CD4-positive, alpha-beta memory T cell (primary cell): ENCODE measurements at regions of chr4 and their contacts with region 1.

Region 1: DNA sequence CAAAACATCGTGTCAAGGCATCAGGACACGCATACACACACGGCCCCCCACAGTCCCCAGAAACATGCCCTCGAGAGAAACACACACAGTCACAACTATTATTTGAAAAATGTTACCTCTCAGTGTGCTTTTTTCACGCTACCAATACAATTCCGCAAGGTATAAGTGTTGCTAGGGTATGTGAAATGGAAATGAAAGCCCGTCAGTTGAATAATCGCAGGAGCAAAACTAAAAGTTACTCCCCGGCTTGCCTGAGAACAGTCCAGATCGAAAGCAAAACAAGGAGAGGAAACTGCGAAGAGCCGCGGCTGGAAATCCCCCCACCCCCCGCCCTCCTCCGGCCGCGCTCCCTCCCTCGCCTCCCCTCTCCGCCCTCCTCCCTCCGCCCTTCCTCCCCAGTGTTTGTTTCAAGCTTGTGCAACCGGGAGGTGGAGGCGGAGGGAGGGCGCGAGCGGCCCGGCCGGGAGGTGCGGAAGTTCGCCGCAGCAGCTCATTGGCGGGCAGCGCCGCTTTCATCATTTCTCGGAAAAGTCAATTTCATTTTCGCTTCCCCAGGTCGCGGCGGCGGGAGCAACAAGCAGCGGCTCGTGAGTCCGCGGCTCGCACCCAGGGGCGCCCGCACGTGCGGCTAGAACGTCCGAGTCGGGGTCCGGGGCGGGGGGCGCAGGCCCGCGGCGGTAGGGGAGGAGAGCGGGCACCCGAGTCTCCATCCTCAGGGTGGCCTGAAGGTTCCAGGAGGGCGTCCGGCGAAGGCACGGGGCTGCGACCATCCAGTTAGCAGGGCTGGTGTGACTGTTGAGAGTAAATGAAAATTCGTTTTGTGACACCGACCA is at the start of gene IRF2:
- DNase-seq: peak; percentile 92 to 99 (median 97)
- H3K4me3 ChIP-seq: peak within 1 kb of the TSS; percentile 96 to 100
- H3K4me3 Mint-ChIP-seq: peak within 1 kb of the TSS; percentile 95 to 100 (median 100)
- H3K27ac ChIP-seq: peak within 1 kb of the TSS; percentile 99
- H3K27ac Mint-ChIP-seq: peak within 1 kb of the TSS; percentile 96 to 100 (median 99)
- H3K4me1 ChIP-seq: peaks cover 66% of the 10 kb centered on the region
- H3K4me1 Mint-ChIP-seq: peaks cover 42 to 85% (median 57%) of the 10 kb centered on the region in 4 donors
- H3K27me3 ChIP-seq: no peaks in the 10 kb centered on the region
- H3K27me3 Mint-ChIP-seq: no peaks in the 10 kb centered on the region
- total RNA-seq, gene IRF2: 66.7 to 70.4 TPM

Region 2: GRCh38 chr4:183444214-183445066 is 1030.0 kb before region 1 on chr4 and contains the start of gene CDKN2AIP:
- CTCF ChIA-PET with region 1: no interaction called
- POLR2A ChIA-PET with region 1: no interaction called
- intact Hi-C with region 1: loop called (anchors 5 kb)
- DNase-seq: peak; percentile 93 to 96 (median 96)
- H3K4me3 ChIP-seq: peak within 1 kb of the TSS; percentile 77 to 85
- H3K4me3 Mint-ChIP-seq: peak within 1 kb of the TSS; percentile 92 to 99 (median 98)
- H3K27ac ChIP-seq: peak within 1 kb of the TSS; percentile 96
- H3K27ac Mint-ChIP-seq: peak within 1 kb of the TSS; percentile 96 to 99 (median 98)
- H3K4me1 ChIP-seq: peaks cover 52% of the 10 kb centered on the region
- H3K4me1 Mint-ChIP-seq: peaks cover 32 to 63% (median 43%) of the 10 kb centered on the region in 4 donors
- H3K27me3 ChIP-seq: no peaks in the 10 kb centered on the region
- H3K27me3 Mint-ChIP-seq: no peaks in the 10 kb centered on the region
- total RNA-seq, gene CDKN2AIP: 48.3 to 51.1 TPM

Region 3: GRCh38 chr4:183738081-183738673 is 736.3 kb before region 1 on chr4:
- CTCF ChIA-PET with region 1: no interaction called
- POLR2A ChIA-PET with region 1: no interaction called
- intact Hi-C with region 1: no loop called
- DNase-seq: no peak
- H3K4me3 ChIP-seq: no peak overlapping the region
- H3K4me3 Mint-ChIP-seq: no peak overlapping the region
- H3K27ac ChIP-seq: no peak overlapping the region
- H3K27ac Mint-ChIP-seq: no peak overlapping the region
- H3K4me1 ChIP-seq: no peaks in the 10 kb centered on the region
- H3K4me1 Mint-ChIP-seq: no peaks in the 10 kb centered on the region
- H3K27me3 ChIP-seq: no peaks in the 10 kb centered on the region
- H3K27me3 Mint-ChIP-seq: peaks cover 0 to 2% of the 10 kb centered on the region in 2 donors

Region 4: DNA sequence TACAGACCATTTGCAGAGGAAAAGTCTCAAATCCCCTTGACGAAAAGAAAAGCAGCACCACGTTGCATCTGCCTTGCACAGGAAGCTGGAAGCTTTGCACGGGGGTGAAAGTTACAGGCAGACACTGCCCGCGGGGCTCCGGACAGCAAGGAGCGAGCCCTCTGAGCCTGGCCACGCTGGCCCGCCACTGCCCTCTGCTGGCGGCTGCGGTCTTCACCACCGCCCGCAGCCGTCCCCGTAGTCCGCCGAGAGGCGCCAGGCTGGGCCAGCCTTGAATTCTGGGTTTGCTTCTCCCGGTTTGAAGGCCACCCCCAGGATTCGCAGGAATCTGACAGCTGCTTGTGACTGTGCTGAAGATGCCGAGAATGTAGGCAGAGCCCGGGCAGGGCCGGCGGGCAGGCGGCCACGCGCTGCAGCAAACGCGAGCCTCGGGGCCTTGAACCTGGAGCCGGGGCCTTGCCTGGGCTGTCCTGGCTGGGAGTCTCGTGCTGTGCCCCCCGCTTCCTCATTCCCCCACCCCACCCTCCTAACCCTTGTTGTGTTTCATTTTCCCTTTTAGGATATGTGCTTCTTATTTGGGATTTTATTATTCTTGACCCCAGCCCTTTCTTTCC is 306.0 kb before region 1 on chr4:
- CTCF ChIA-PET with region 1: no interaction called
- POLR2A ChIA-PET with region 1: no interaction called
- intact Hi-C with region 1: no loop called
- DNase-seq: peak in 4 of 5 donors; percentile 11 to 38 (median 20)
- H3K4me3 ChIP-seq: no peak overlapping the region
- H3K4me3 Mint-ChIP-seq: no peak overlapping the region
- H3K27ac ChIP-seq: no peak overlapping the region
- H3K27ac Mint-ChIP-seq: no peak overlapping the region
- H3K4me1 ChIP-seq: no peaks in the 10 kb centered on the region
- H3K4me1 Mint-ChIP-seq: peaks cover 0 to 8% (median under 1%) of the 10 kb centered on the region in 4 donors
- H3K27me3 ChIP-seq: no peaks in the 10 kb centered on the region
- H3K27me3 Mint-ChIP-seq: peaks cover 41 to 49% of the 10 kb centered on the region in 2 donors

Region 5: DNA sequence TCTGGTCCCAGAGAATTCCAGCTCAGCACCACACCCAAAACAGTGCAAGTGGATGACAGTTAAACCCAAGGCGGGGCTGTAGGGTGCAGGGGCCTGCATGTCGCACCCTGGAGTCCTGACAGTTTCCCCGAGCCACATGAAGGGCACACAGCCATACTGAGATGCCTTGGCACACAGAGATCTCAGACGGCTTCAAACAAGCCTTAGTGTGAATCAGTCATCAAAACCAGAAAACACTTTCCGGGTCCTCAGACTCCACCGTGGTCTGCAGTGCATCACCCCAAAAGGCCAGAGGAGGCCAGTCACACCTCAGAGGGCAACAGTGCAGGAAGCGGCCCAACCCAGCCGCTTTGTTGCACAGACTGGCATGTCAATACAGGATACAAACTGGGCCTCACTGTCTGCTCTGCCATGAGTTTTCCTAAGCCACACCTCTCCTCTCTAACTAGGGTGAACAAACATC is 192.2 kb before region 1 on chr4:
- CTCF ChIA-PET with region 1: no interaction called
- POLR2A ChIA-PET with region 1: interaction called, 4 read pairs
- intact Hi-C with region 1: loop called (anchors 5 kb)
- DNase-seq: peak; percentile 25 to 64 (median 37)
- H3K4me3 ChIP-seq: no peak overlapping the region
- H3K4me3 Mint-ChIP-seq: peak overlapping the region in 7 of 8 donors; percentile 3 to 43 (median 26)
- H3K27ac ChIP-seq: peak overlapping the region; percentile 13
- H3K27ac Mint-ChIP-seq: peak overlapping the region; percentile 31 to 87 (median 75)
- H3K4me1 ChIP-seq: peaks cover 37% of the 10 kb centered on the region
- H3K4me1 Mint-ChIP-seq: peaks cover 28 to 48% (median 38%) of the 10 kb centered on the region in 4 donors
- H3K27me3 ChIP-seq: no peaks in the 10 kb centered on the region
- H3K27me3 Mint-ChIP-seq: no peaks in the 10 kb centered on the region

Region 6: DNA sequence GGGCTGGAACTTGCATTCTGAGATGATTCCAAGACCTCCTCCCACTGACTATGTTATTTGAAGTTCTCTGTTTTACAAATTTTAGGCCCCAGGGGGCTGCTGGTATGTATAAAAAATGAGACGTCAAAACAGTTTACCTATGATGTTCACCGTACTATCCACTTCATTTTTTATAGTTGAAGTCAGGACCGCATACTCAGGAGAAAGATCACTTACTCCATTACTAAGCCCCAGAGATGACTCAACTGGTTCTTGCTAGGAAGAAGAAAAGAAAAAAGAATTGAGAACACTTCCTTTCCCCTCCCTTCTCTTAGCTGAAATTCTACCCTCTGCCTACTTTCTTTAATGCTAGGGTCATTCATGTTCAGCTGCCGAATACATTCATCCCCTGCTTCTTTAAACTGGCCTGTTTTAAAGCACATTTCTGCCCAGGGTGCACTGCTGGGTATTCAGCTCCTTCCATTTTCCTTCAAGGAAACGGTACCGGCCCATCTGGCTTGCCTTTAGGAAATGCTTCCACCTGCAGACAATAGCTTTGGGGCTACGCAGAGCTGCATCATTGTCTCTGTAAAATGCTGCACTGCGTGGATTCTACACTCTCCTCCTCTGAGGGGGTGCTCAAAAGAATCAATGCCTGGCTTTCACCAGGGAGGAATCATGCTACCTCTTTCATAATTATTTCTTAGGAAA is 66.3 kb before region 1 on chr4:
- CTCF ChIA-PET with region 1: interaction called, 4 read pairs
- POLR2A ChIA-PET with region 1: interaction called, 10 read pairs
- intact Hi-C with region 1: no loop called
- DNase-seq: no peak
- H3K4me3 ChIP-seq: no peak overlapping the region
- H3K4me3 Mint-ChIP-seq: peak overlapping the region in 2 of 8 donors; percentile 22 to 33
- H3K27ac ChIP-seq: no peak overlapping the region
- H3K27ac Mint-ChIP-seq: peak overlapping the region; percentile 31 to 91 (median 76)
- H3K4me1 ChIP-seq: peaks cover 37% of the 10 kb centered on the region
- H3K4me1 Mint-ChIP-seq: peaks cover 27 to 73% (median 48%) of the 10 kb centered on the region in 4 donors
- H3K27me3 ChIP-seq: no peaks in the 10 kb centered on the region
- H3K27me3 Mint-ChIP-seq: no peaks in the 10 kb centered on the region

Region 7: GRCh38 chr4:184453365-184454160 is 20.9 kb before region 1 on chr4:
- CTCF ChIA-PET with region 1: no interaction called
- POLR2A ChIA-PET with region 1: interaction called, 19 read pairs
- intact Hi-C with region 1: loop called (anchors 2 kb)
- DNase-seq: peak; percentile 42 to 82 (median 56)
- H3K4me3 ChIP-seq: no peak overlapping the region
- H3K4me3 Mint-ChIP-seq: peak overlapping the region in 7 of 8 donors; percentile 42 to 84 (median 71)
- H3K27ac ChIP-seq: peak overlapping the region; percentile 44
- H3K27ac Mint-ChIP-seq: peak overlapping the region; percentile 79 to 96 (median 88)
- H3K4me1 ChIP-seq: peaks cover 74% of the 10 kb centered on the region
- H3K4me1 Mint-ChIP-seq: peaks cover 56 to 90% (median 72%) of the 10 kb centered on the region in 4 donors
- H3K27me3 ChIP-seq: no peaks in the 10 kb centered on the region
- H3K27me3 Mint-ChIP-seq: no peaks in the 10 kb centered on the region

Region 8: GRCh38 chr4:184538023-184538599 is 63.6 kb after region 1 on chr4:
- CTCF ChIA-PET with region 1: interaction called, 13 read pairs
- POLR2A ChIA-PET with region 1: interaction called, 142 read pairs
- intact Hi-C with region 1: loop called (anchors 1 kb)
- DNase-seq: peak; percentile 59 to 71 (median 65)
- H3K4me3 ChIP-seq: peak overlapping the region; percentile 82 to 92
- H3K4me3 Mint-ChIP-seq: peak overlapping the region; percentile 91 to 98 (median 94)
- H3K27ac ChIP-seq: peak overlapping the region; percentile 98
- H3K27ac Mint-ChIP-seq: peak overlapping the region; percentile 94 to 100 (median 99)
- H3K4me1 ChIP-seq: peaks cover 37% of the 10 kb centered on the region
- H3K4me1 Mint-ChIP-seq: peaks cover 28 to 51% (median 35%) of the 10 kb centered on the region in 4 donors
- H3K27me3 ChIP-seq: no peaks in the 10 kb centered on the region
- H3K27me3 Mint-ChIP-seq: no peaks in the 10 kb centered on the region

Region 9: DNA sequence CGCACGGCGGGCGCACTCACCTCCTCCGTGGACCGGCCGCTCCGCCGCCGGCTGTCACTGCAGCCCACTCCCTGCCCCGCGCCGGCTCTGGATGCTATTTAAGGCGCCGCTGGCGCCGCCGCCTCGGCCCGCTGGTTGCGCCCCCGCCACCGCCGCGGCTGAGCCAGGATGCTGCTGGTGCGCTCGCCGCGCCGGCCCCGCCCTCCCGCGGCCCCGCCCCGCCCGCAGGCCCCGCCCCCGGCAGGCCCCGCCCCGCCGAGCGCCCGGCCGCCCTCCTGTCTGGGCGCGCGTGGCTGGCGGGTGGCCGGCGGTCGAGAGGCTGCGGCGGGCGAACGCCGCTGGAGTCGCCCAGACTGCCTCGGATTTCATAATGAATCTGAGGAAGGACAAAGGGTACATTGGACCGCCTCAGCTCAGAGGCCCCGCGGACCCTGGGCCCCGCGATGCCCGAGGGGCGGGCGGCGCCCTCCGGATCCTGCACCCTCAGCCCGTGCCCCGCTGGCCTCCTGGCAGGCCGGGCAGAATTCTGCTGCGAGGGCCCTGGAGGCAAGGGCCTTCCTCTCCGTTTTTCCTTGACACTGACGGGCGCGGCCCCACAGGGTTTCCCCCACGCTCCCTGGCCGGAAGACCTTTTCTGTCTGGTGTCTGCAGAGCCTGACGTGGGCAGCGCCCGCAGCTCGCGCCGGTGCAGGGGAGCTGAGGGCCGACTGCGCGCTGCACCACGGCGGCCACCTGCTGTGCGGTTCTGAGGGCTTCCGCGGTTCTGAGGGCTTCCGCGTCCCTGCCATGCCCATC is 351.6 kb after region 1 on chr4 and contains the start of gene ACSL1:
- CTCF ChIA-PET with region 1: no interaction called
- POLR2A ChIA-PET with region 1: no interaction called
- intact Hi-C with region 1: loop called (anchors 5 kb)
- DNase-seq: peak; percentile 73 to 80 (median 79)
- H3K4me3 ChIP-seq: peak within 1 kb of the TSS; percentile 24 to 55
- H3K4me3 Mint-ChIP-seq: peak within 1 kb of the TSS; percentile 85 to 97 (median 91)
- H3K27ac ChIP-seq: peak within 1 kb of the TSS; percentile 56
- H3K27ac Mint-ChIP-seq: peak within 1 kb of the TSS; percentile 85 to 97 (median 93)
- H3K4me1 ChIP-seq: peaks cover 24% of the 10 kb centered on the region
- H3K4me1 Mint-ChIP-seq: peaks cover 13 to 45% (median 19%) of the 10 kb centered on the region in 4 donors
- H3K27me3 ChIP-seq: no peaks in the 10 kb centered on the region
- H3K27me3 Mint-ChIP-seq: no peaks in the 10 kb centered on the region
- total RNA-seq, gene ACSL1: 11.5 to 12.9 TPM

Region 10: GRCh38 chr4:184896868-184897715 is 422.6 kb after region 1 on chr4:
- CTCF ChIA-PET with region 1: no interaction called
- POLR2A ChIA-PET with region 1: no interaction called
- intact Hi-C with region 1: no loop called
- DNase-seq: no peak
- H3K4me3 ChIP-seq: no peak overlapping the region
- H3K4me3 Mint-ChIP-seq: no peak overlapping the region
- H3K27ac ChIP-seq: no peak overlapping the region
- H3K27ac Mint-ChIP-seq: no peak overlapping the region
- H3K4me1 ChIP-seq: no peaks in the 10 kb centered on the region
- H3K4me1 Mint-ChIP-seq: no peaks in the 10 kb centered on the region
- H3K27me3 ChIP-seq: no peaks in the 10 kb centered on the region
- H3K27me3 Mint-ChIP-seq: peaks cover 12 to 29% of the 10 kb centered on the region in 2 donors